ENCODE measurements at regions of chr3 and their contacts with region 1.

Region 1: DNA sequence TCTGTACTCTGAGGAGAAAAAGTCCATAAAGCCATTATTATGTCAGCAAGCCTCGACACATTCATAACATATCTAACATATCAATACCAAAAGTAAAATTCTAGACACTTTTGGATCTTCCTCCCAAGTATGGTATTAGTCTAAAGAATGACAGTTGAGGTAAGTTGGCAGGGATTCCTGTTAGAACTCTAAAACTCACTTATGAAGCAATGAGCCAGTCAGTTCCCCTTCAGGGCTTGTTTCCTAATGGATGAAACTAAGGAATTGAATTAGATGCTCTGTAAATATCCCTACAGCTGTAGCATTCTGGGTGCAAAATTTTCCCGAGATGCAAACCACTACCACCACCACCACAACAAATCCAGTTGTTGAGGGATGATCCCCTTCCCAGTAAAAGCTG is 1.2 kb downstream of the DNAH12 start:
- DNase-seq: no peak
- ATAC-seq: no peak
- H3K4me3 ChIP-seq: no peak overlapping the region
- H3K4me3 Mint-ChIP-seq: no peak overlapping the region
- H3K27ac ChIP-seq: no peak overlapping the region
- H3K27ac Mint-ChIP-seq: no peak overlapping the region
- H3K4me1 ChIP-seq: peaks cover 2 to 4% of the 10 kb centered on the region in 2 experiments
- H3K4me1 Mint-ChIP-seq: peaks cover 6 to 8% (median 8%) of the 10 kb centered on the region in 3 donors
- H3K27me3 ChIP-seq: peaks cover 0 to 5% of the 10 kb centered on the region in 2 experiments
- H3K27me3 Mint-ChIP-seq: peaks cover 0 to 6% of the 10 kb centered on the region in 2 donors

Region 2: DNA sequence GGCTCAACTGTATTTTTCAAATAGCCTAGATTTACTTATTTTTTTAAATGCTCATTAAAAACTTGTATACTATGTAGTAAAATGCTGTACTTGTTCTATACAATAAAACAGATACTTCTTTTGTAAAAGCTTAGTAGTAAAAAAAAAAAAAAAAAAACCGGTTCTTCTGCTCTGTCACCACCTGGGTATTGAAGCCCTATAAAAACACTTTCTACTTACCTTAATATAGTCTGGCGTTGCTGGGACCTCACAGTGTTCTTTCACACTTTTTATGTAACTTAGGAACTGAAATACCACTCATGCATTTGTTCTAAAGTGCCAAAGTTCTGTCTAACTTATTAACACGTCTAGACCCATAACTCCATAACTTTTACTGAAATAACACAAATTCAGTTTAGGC is 921.2 kb before region 1 on chr3:
- CTCF ChIA-PET with region 1: no interaction called
- POLR2A ChIA-PET with region 1: interaction called in 1 of 2 experiments, 10 read pairs
- DNase-seq: no peak
- ATAC-seq: no peak
- H3K4me3 ChIP-seq: no peak overlapping the region
- H3K4me3 Mint-ChIP-seq: no peak overlapping the region
- H3K27ac ChIP-seq: no peak overlapping the region
- H3K27ac Mint-ChIP-seq: peak overlapping the region in 1 of 2 donors; percentile 72
- H3K4me1 ChIP-seq: no peaks in the 10 kb centered on the region
- H3K4me1 Mint-ChIP-seq: peaks cover 1 to 15% (median 10%) of the 10 kb centered on the region in 3 donors
- H3K27me3 ChIP-seq: no peaks in the 10 kb centered on the region
- H3K27me3 Mint-ChIP-seq: no peaks in the 10 kb centered on the region

Region 3: DNA sequence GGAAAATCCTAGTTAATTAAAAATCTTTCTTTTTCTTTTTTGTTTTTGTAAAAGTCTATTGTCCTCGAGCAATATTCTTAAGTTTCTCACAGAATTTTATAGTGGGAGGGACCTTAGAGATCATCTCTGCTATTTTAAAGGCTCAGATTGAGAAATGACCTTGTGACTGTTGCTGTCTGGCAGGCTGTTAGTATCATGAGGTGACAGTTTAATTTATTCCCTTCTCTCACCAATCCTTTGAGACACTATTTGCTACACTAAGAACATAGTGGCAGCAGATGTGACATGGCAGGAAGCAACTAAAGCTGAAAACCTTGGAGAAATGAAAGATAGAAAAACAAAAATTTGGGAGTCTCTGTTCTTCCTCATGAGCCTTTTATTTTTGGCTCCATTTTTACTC is 290.5 kb before region 1 on chr3:
- CTCF ChIA-PET with region 1: no interaction called
- POLR2A ChIA-PET with region 1: no interaction called
- DNase-seq: no peak
- ATAC-seq: no peak
- H3K4me3 ChIP-seq: no peak overlapping the region
- H3K4me3 Mint-ChIP-seq: no peak overlapping the region
- H3K27ac ChIP-seq: no peak overlapping the region
- H3K27ac Mint-ChIP-seq: no peak overlapping the region
- H3K4me1 ChIP-seq: no peaks in the 10 kb centered on the region
- H3K4me1 Mint-ChIP-seq: no peaks in the 10 kb centered on the region
- H3K27me3 ChIP-seq: no peaks in the 10 kb centered on the region
- H3K27me3 Mint-ChIP-seq: no peaks in the 10 kb centered on the region

Measured in T-cell (primary cell).